WTC11 (cell line): ENCODE measurements at regions of chr6 and their contacts with region 1.

Region 1: GRCh38 chr6:123802697-123803496 is 768 bp upstream of the NKAIN2 start:
- DNase-seq: peak; percentile 90
- ATAC-seq: peak; percentile 87
- H3K4me3 Mint-ChIP-seq: peak overlapping the region; percentile 82
- H3K27ac Mint-ChIP-seq: no peak overlapping the region
- H3K4me1 Mint-ChIP-seq: peaks cover 9% of the 10 kb centered on the region
- H3K27me3 Mint-ChIP-seq: peaks cover 63% of the 10 kb centered on the region
- CTCF ChIP-seq: peak; percentile 82

Region 2: GRCh38 chr6:123733180-123733956 is 69.5 kb before region 1 on chr6:
- CTCF ChIA-PET with region 1: no interaction called
- POLR2A ChIA-PET with region 1: no interaction called
- DNase-seq: no peak
- ATAC-seq: no peak
- H3K4me3 Mint-ChIP-seq: no peak overlapping the region
- H3K27ac Mint-ChIP-seq: no peak overlapping the region; the same call in 1 of the 2 replicates
- H3K4me1 Mint-ChIP-seq: peaks cover 6% of the 10 kb centered on the region
- H3K27me3 Mint-ChIP-seq: no peaks in the 10 kb centered on the region
- CTCF ChIP-seq: no peak

Region 3: GRCh38 chr6:123777563-123777962 is 25.3 kb before region 1 on chr6:
- CTCF ChIA-PET with region 1: interaction called, 13 read pairs
- POLR2A ChIA-PET with region 1: no interaction called
- DNase-seq: no peak
- ATAC-seq: no peak
- H3K4me3 Mint-ChIP-seq: no peak overlapping the region
- H3K27ac Mint-ChIP-seq: no peak overlapping the region
- H3K4me1 Mint-ChIP-seq: no peaks in the 10 kb centered on the region
- H3K27me3 Mint-ChIP-seq: no peaks in the 10 kb centered on the region
- CTCF ChIP-seq: no peak

Region 4: GRCh38 chr6:123965894-123966293 is 163.0 kb after region 1 on chr6:
- CTCF ChIA-PET with region 1: interaction called, 26 read pairs
- POLR2A ChIA-PET with region 1: no interaction called
- DNase-seq: peak; percentile 44
- ATAC-seq: peak; percentile 92
- H3K4me3 Mint-ChIP-seq: no peak overlapping the region
- H3K27ac Mint-ChIP-seq: no peak overlapping the region
- H3K4me1 Mint-ChIP-seq: peaks cover 22% of the 10 kb centered on the region
- H3K27me3 Mint-ChIP-seq: no peaks in the 10 kb centered on the region
- CTCF ChIP-seq: no peak

Region 5: DNA sequence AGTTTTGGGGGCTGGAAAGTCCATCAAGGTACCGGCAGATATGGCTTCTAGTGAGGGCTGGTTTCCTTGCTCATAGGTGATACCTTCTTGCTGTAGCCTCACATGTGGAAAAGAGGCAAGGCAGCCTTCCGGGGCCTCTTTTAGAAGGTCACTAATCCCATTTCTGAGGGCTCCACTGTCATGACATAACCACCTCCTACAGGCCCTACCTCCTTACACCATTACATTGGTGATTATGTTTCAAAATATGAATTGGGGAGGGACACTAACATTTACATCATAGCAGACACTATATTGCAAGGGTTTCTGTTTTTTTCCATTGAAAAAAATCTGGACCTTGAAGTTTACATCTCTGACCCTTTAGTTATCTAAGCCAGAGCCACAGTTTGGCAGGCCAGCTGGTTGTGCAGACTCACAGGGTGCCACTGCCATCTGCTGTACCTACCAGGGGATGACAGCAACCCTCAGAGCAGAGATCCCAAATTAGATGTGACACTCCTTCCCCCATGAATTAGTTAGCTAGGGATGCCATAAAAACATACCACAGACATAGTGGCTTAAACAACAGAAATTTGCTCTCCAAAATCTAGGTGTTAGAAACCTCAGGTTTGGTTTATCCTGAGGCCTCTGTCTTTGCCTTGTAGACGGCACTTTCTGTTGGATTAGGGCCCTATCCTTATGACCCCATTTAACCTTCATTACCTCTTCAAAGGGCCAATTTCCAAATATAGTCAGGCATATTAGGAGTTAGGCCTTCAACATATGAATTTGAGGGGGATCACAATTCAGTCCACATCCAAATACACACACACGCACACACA is 993.0 kb after region 1 on chr6:
- CTCF ChIA-PET with region 1: interaction called, 14 read pairs
- POLR2A ChIA-PET with region 1: no interaction called
- DNase-seq: peak; percentile 53
- ATAC-seq: peak; percentile 90
- H3K4me3 Mint-ChIP-seq: no peak overlapping the region
- H3K27ac Mint-ChIP-seq: no peak overlapping the region
- H3K4me1 Mint-ChIP-seq: peaks cover 12% of the 10 kb centered on the region
- H3K27me3 Mint-ChIP-seq: no peaks in the 10 kb centered on the region
- CTCF ChIP-seq: peak; percentile 45; the same call in 1 of the 2 replicates